PC-9 (cell line): ENCODE measurements at regions of chr1 and their contacts with region 1.

Region 1: GRCh38 chr1:14923727-14924452 is 229.7 kb upstream of the TMEM51 start:
- DNase-seq: peak in 1 of 2 experiments; percentile 60
- H3K4me3 ChIP-seq: no peak overlapping the region
- H3K27ac ChIP-seq: no peak overlapping the region
- H3K4me1 ChIP-seq: peaks cover 7% of the 10 kb centered on the region; the same call in 1 of the 2 replicates
- H3K27me3 ChIP-seq: peaks cover 11% of the 10 kb centered on the region
- CTCF ChIP-seq: no peak

Region 2: GRCh38 chr1:15028102-15028501 is 104.2 kb after region 1 on chr1:
- CTCF ChIA-PET with region 1: no interaction called
- POLR2A ChIA-PET with region 1: no interaction called
- intact Hi-C with region 1: loop called (anchors 1 kb)
- DNase-seq: peak; percentile 42 to 71
- H3K4me3 ChIP-seq: no peak overlapping the region
- H3K27ac ChIP-seq: no peak overlapping the region
- H3K4me1 ChIP-seq: no peaks in the 10 kb centered on the region
- H3K27me3 ChIP-seq: no peaks in the 10 kb centered on the region
- CTCF ChIP-seq: no peak

Region 3: GRCh38 chr1:15100121-15100874 is 176.4 kb after region 1 on chr1:
- CTCF ChIA-PET with region 1: no interaction called
- POLR2A ChIA-PET with region 1: no interaction called
- intact Hi-C with region 1: loop called (anchors 10 kb)
- DNase-seq: peak; percentile 39 to 68
- H3K4me3 ChIP-seq: no peak overlapping the region
- H3K27ac ChIP-seq: no peak overlapping the region
- H3K4me1 ChIP-seq: no peaks in the 10 kb centered on the region
- H3K27me3 ChIP-seq: no peaks in the 10 kb centered on the region
- CTCF ChIP-seq: peak; percentile 88

Region 4: DNA sequence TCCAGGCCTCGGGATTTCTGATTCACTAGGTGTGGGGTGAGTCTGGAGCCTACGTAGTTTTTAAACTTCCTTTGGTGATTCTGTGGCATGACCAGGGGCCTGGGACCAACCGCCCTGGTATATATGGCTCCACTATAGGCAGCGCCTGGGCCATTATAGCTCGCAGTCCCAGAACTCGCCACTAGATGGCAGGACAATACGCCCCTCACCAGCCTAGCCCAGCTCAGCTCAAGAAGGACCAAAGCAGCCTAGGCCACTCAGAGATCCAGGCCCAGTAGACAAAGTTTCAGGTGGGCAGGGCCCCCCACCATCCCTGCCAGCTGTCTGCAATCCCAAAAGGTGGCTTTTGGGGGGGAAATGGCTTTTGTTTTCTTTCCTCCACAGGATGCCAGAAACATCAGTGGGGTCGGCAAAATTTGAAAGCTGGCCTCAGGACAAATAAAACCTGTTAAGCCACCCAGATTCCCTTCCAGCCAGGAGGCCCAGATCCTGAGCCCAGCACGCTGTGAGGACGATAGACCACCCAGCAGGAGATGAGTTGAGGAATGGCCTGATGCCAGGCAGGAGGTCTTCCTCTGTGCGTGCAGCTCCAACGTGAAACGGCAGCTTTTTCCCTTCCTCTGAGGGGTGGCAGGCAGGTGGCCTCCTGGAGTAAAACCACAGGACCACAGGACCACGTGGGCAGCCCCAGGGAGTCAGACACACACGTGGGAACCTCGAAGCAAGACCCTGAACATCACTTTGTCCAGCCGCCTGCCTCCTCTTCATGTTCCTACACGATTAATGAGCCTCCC is 204.8 kb after region 1 on chr1:
- CTCF ChIA-PET with region 1: no interaction called
- POLR2A ChIA-PET with region 1: no interaction called
- intact Hi-C with region 1: no loop called
- DNase-seq: peak in 1 of 2 experiments; percentile 73
- H3K4me3 ChIP-seq: no peak overlapping the region
- H3K27ac ChIP-seq: no peak overlapping the region
- H3K4me1 ChIP-seq: no peaks in the 10 kb centered on the region
- H3K27me3 ChIP-seq: no peaks in the 10 kb centered on the region
- CTCF ChIP-seq: peak; percentile 87